ENCODE measurements at regions of chr20 and their contacts with region 1.

Region 1: GRCh38 chr20:33666293-33667244 is at the start of gene ACTL10:
- DNase-seq: peak; percentile 83
- ATAC-seq: peak; percentile 75
- H3K4me3 Mint-ChIP-seq: peak within 1 kb of the TSS; percentile 93
- H3K27ac Mint-ChIP-seq: peak within 1 kb of the TSS; percentile 95
- H3K4me1 Mint-ChIP-seq: peaks cover 34% of the 10 kb centered on the region
- H3K27me3 Mint-ChIP-seq: no peaks in the 10 kb centered on the region
- CTCF ChIP-seq: no peak
- total RNA-seq, gene ACTL10: 2.8 and 3.9 TPM in 2 replicates

Region 2: GRCh38 chr20:33277471-33278441 is 388.8 kb before region 1 on chr20:
- CTCF ChIA-PET with region 1: no interaction called
- POLR2A ChIA-PET with region 1: no interaction called
- intact Hi-C with region 1: no loop called
- DNase-seq: no peak
- ATAC-seq: no peak
- H3K4me3 Mint-ChIP-seq: no peak overlapping the region
- H3K27ac Mint-ChIP-seq: no peak overlapping the region
- H3K4me1 Mint-ChIP-seq: no peaks in the 10 kb centered on the region
- H3K27me3 Mint-ChIP-seq: peaks cover 29% of the 10 kb centered on the region
- CTCF ChIP-seq: no peak

Region 3: GRCh38 chr20:33299111-33299603 is 367.4 kb before region 1 on chr20:
- CTCF ChIA-PET with region 1: no interaction called
- POLR2A ChIA-PET with region 1: no interaction called
- intact Hi-C with region 1: loop called (anchors 5 kb)
- DNase-seq: peak; percentile 69
- ATAC-seq: peak; percentile 75
- H3K4me3 Mint-ChIP-seq: no peak overlapping the region
- H3K27ac Mint-ChIP-seq: no peak overlapping the region
- H3K4me1 Mint-ChIP-seq: no peaks in the 10 kb centered on the region
- H3K27me3 Mint-ChIP-seq: peaks cover 13% of the 10 kb centered on the region
- CTCF ChIP-seq: peak; percentile 95

Region 4: GRCh38 chr20:33408716-33409654 is 257.6 kb before region 1 on chr20:
- CTCF ChIA-PET with region 1: no interaction called
- POLR2A ChIA-PET with region 1: interaction called, 4 read pairs
- intact Hi-C with region 1: loop called (anchors 2 kb)
- DNase-seq: peak; percentile 39
- ATAC-seq: peak; percentile 90
- H3K4me3 Mint-ChIP-seq: peak overlapping the region; percentile 61
- H3K27ac Mint-ChIP-seq: peak overlapping the region; percentile 90
- H3K4me1 Mint-ChIP-seq: peaks cover 44% of the 10 kb centered on the region
- H3K27me3 Mint-ChIP-seq: no peaks in the 10 kb centered on the region
- CTCF ChIP-seq: no peak

Region 5: DNA sequence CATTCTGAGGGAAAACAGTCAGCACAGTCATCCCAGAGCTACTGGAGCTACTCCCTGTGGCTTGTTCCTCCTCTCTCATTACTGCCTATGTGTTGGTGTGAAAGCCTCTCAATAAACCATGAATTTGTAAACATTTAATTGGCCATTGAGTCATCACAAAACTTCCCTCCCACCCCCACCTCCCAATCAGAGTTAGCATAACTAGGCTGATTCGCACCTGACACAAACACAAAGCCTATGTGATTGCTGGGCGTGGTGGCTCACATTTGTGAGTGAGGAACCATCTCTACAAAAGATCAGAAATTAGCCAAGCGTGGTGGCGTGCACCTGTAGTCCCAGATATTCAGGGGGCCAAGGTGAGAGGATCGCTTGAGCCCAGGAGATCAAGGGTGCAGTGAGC is 205.9 kb before region 1 on chr20:
- CTCF ChIA-PET with region 1: interaction called, 40 read pairs
- POLR2A ChIA-PET with region 1: interaction called, 8 read pairs
- intact Hi-C with region 1: loop called (anchors 1 kb)
- DNase-seq: no peak
- ATAC-seq: no peak
- H3K4me3 Mint-ChIP-seq: no peak overlapping the region
- H3K27ac Mint-ChIP-seq: no peak overlapping the region
- H3K4me1 Mint-ChIP-seq: peaks cover 18% of the 10 kb centered on the region
- H3K27me3 Mint-ChIP-seq: no peaks in the 10 kb centered on the region
- CTCF ChIP-seq: no peak

Region 6: DNA sequence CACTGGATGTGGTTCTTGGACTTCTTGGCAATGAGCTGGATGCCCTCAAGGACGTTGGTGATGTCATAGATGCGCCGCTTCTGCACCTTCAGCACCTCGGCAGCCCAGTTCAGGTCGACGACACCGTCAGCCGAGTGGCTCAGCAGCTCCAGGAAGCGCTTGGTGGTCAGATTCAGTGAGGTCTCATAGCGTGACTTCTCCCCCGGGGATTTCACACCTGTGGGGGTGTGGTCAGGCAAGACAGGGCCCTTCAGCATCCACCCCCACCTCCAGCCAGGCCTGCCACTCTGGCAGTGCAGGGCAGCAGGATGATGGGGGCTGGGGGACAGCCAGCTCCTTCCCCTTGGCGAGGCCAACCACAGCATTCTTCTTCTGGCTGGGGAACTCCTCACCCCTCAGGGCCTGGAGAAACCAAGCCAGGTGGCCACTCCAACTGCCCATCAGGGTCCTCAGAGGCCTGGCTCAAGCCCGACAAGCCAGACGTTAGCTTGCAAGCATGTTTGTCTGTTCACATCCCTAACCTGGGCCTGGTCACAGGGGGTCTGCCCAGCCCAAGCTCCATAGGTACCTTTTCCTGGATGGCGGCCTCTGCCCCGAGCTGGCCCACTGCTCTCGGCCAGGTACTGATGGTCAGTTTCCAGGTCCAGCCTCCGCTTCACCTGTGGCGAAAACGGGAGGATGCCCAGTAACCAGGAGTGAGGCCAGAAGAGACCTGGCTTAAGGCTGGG is 13.4 kb after region 1 on chr20:
- CTCF ChIA-PET with region 1: interaction called, 23 read pairs
- POLR2A ChIA-PET with region 1: interaction called, 18 read pairs
- intact Hi-C with region 1: no loop called
- DNase-seq: no peak
- ATAC-seq: peak; percentile 86
- H3K4me3 Mint-ChIP-seq: no peak overlapping the region
- H3K27ac Mint-ChIP-seq: peak overlapping the region; percentile 35
- H3K4me1 Mint-ChIP-seq: peaks cover 43% of the 10 kb centered on the region
- H3K27me3 Mint-ChIP-seq: no peaks in the 10 kb centered on the region
- CTCF ChIP-seq: no peak

Region 7: GRCh38 chr20:33781133-33781532 is 114.6 kb after region 1 on chr20:
- CTCF ChIA-PET with region 1: interaction called, 4 read pairs
- POLR2A ChIA-PET with region 1: interaction called, 7 read pairs
- intact Hi-C with region 1: loop called (anchors 5 kb)
- DNase-seq: no peak
- ATAC-seq: no peak
- H3K4me3 Mint-ChIP-seq: peak overlapping the region; percentile 12
- H3K27ac Mint-ChIP-seq: peak overlapping the region; percentile 95
- H3K4me1 Mint-ChIP-seq: peaks cover 86% of the 10 kb centered on the region
- H3K27me3 Mint-ChIP-seq: no peaks in the 10 kb centered on the region
- CTCF ChIP-seq: no peak

Region 8: DNA sequence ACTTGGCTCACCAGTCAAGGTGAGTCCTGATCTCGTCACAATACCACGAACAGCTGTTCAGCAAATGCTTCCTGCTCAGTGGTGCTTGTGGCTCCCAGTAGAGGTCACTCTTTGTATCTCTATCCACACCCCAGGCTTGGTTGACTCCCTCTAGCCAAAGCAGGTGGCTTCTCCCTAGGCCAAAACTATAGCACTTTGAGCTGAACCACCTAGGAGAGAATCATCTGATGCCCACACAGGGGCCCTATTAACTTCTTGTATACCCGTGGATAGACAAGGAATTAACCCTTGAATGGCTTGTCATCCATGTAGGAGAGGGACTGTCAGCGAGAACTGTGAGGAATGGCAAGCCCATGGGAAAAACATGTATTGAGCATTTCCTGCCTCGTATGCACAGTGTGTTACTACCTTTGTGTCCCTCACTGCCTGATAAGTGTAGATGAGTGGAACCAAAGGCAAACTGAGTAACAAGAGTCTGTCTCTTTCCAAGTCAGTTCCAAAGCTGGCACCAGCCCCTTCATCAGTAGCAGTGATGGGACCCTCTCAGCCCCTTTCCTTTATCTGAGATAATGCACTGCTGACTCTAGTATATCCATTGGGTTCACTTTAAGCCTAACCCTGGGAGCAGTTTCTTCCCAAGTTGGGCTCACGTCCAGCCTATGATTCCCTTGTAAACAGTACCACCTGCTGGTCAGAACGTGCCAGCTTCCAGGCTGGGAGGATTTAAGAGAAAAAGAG is 402.9 kb after region 1 on chr20:
- CTCF ChIA-PET with region 1: interaction called, 10 read pairs
- POLR2A ChIA-PET with region 1: no interaction called
- intact Hi-C with region 1: loop called (anchors 5 kb)
- DNase-seq: no peak
- ATAC-seq: peak; percentile 89
- H3K4me3 Mint-ChIP-seq: no peak overlapping the region
- H3K27ac Mint-ChIP-seq: peak overlapping the region; percentile 61
- H3K4me1 Mint-ChIP-seq: peaks cover 24% of the 10 kb centered on the region
- H3K27me3 Mint-ChIP-seq: no peaks in the 10 kb centered on the region
- CTCF ChIP-seq: peak; percentile 36